ENCODE measurements at regions of chr6 and their contacts with region 1.

Region 1: GRCh38 chr6:139219271-139219729 is 72.5 kb downstream of the TXLNB start:
- DNase-seq: peak; percentile 54 to 70 (median 68)
- H3K4me3 ChIP-seq: no peak overlapping the region
- H3K4me3 Mint-ChIP-seq: peak overlapping the region in 6 of 8 donors; percentile 23 to 80 (median 74)
- H3K27ac ChIP-seq: no peak overlapping the region
- H3K27ac Mint-ChIP-seq: peak overlapping the region; percentile 33 to 94 (median 87)
- H3K4me1 ChIP-seq: peaks cover 14% of the 10 kb centered on the region
- H3K4me1 Mint-ChIP-seq: peaks cover 8 to 13% (median 11%) of the 10 kb centered on the region in 4 donors
- H3K27me3 ChIP-seq: no peaks in the 10 kb centered on the region
- H3K27me3 Mint-ChIP-seq: no peaks in the 10 kb centered on the region

Region 2: GRCh38 chr6:138931660-138932059 is 287.6 kb before region 1 on chr6:
- CTCF ChIA-PET with region 1: no interaction called
- POLR2A ChIA-PET with region 1: no interaction called
- intact Hi-C with region 1: no loop called
- DNase-seq: no peak
- H3K4me3 ChIP-seq: no peak overlapping the region
- H3K4me3 Mint-ChIP-seq: no peak overlapping the region
- H3K27ac ChIP-seq: no peak overlapping the region
- H3K27ac Mint-ChIP-seq: peak overlapping the region in 1 of 7 donors; percentile 23
- H3K4me1 ChIP-seq: peaks cover 7% of the 10 kb centered on the region
- H3K4me1 Mint-ChIP-seq: peaks cover 8 to 13% (median 9%) of the 10 kb centered on the region in 4 donors
- H3K27me3 ChIP-seq: no peaks in the 10 kb centered on the region
- H3K27me3 Mint-ChIP-seq: no peaks in the 10 kb centered on the region

Region 3: DNA sequence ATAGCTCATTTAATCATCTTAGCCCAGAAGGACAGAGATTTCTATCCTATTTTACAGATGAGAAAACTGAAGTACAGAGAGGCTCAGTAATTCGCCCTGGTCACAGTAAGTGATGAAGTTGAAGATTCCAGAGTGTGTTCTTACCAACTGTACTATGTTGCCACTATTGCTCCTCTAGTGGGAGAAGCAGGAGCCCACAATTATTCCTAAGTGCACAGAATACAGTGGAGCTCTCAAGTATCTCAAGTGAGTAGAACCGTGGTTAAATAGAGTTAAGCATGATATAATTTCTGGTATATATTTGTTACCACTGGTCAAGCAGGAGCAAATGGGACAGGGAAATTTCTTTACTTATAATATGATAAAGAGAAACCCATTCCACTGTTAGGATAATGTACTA is 253.3 kb before region 1 on chr6:
- CTCF ChIA-PET with region 1: no interaction called
- POLR2A ChIA-PET with region 1: no interaction called
- intact Hi-C with region 1: no loop called
- DNase-seq: no peak
- H3K4me3 ChIP-seq: no peak overlapping the region
- H3K4me3 Mint-ChIP-seq: no peak overlapping the region
- H3K27ac ChIP-seq: no peak overlapping the region
- H3K27ac Mint-ChIP-seq: no peak overlapping the region
- H3K4me1 ChIP-seq: peaks cover 29% of the 10 kb centered on the region
- H3K4me1 Mint-ChIP-seq: peaks cover 27 to 52% (median 39%) of the 10 kb centered on the region in 4 donors
- H3K27me3 ChIP-seq: no peaks in the 10 kb centered on the region
- H3K27me3 Mint-ChIP-seq: no peaks in the 10 kb centered on the region

Region 4: GRCh38 chr6:139109558-139109957 is 109.7 kb before region 1 on chr6:
- CTCF ChIA-PET with region 1: interaction called, 10 read pairs
- POLR2A ChIA-PET with region 1: no interaction called
- intact Hi-C with region 1: no loop called
- DNase-seq: peak in 4 of 5 donors; percentile 11 to 30 (median 21)
- H3K4me3 ChIP-seq: no peak overlapping the region
- H3K4me3 Mint-ChIP-seq: peak overlapping the region in 2 of 8 donors; percentile 13 to 39
- H3K27ac ChIP-seq: no peak overlapping the region
- H3K27ac Mint-ChIP-seq: peak overlapping the region; percentile 3 to 87 (median 44)
- H3K4me1 ChIP-seq: peaks cover 50% of the 10 kb centered on the region
- H3K4me1 Mint-ChIP-seq: peaks cover 38 to 59% (median 51%) of the 10 kb centered on the region in 4 donors
- H3K27me3 ChIP-seq: no peaks in the 10 kb centered on the region
- H3K27me3 Mint-ChIP-seq: no peaks in the 10 kb centered on the region

Region 5: DNA sequence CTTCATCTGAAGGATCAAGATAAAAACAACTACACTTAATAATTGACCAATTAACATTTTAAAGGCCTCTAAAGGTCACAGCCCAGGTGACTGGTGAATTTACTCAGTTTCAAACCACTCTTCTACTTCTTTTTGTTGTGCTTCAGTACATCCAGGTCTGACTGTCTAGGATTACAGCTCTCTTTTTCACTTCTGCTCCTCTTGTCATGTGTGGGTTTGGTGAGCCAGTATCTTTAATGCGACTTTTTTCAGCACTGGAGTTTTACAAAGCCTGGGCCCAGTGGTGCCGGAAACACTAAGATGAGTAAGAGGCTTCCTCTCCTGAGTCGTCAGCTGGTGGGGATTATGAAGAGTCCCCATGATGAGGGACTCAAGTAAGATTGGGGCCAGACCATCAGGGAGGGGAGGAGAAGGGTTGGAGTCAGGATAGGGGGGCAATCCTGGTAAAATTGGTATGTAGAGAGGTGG is 57.4 kb before region 1 on chr6:
- CTCF ChIA-PET with region 1: interaction called, 7 read pairs
- POLR2A ChIA-PET with region 1: interaction called, 10 read pairs
- intact Hi-C with region 1: no loop called
- DNase-seq: peak; percentile 62 to 87 (median 69)
- H3K4me3 ChIP-seq: peak overlapping the region in 1 of 2 donors; percentile 12
- H3K4me3 Mint-ChIP-seq: peak overlapping the region; percentile 76 to 91 (median 83)
- H3K27ac ChIP-seq: peak overlapping the region; percentile 56
- H3K27ac Mint-ChIP-seq: peak overlapping the region; percentile 86 to 98 (median 95)
- H3K4me1 ChIP-seq: peaks cover 100% of the 10 kb centered on the region
- H3K4me1 Mint-ChIP-seq: peaks cover 73 to 97% (median 85%) of the 10 kb centered on the region in 4 donors
- H3K27me3 ChIP-seq: no peaks in the 10 kb centered on the region
- H3K27me3 Mint-ChIP-seq: no peaks in the 10 kb centered on the region

Region 6: DNA sequence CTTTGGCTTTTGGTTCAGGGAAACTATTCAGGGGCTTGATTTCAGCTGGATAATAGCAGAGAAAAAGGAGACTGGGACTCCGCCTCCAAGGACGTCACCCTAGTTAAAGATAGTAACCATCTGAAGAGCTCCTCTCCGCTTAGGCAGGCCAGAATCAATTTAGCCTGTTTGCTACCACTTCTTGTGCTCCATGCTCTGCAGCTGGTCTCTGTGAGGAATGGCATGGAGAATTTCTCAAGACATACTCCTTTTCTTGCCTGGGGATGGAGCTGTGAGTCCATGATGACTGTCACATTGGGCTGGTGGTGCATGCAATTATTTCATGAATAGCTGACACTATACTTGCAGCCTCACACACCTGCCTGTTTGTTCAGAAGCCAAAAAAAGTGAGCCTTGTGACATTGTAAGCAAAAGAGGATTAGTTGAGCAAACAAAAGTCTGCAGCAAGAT is 11.1 kb after region 1 on chr6:
- CTCF ChIA-PET with region 1: interaction called, 31 read pairs
- POLR2A ChIA-PET with region 1: interaction called, 7 read pairs
- intact Hi-C with region 1: no loop called
- DNase-seq: peak in 4 of 5 donors; percentile 17 to 31 (median 22)
- H3K4me3 ChIP-seq: no peak overlapping the region
- H3K4me3 Mint-ChIP-seq: no peak overlapping the region
- H3K27ac ChIP-seq: no peak overlapping the region
- H3K27ac Mint-ChIP-seq: peak overlapping the region in 2 of 7 donors; percentile 19 to 65
- H3K4me1 ChIP-seq: no peaks in the 10 kb centered on the region
- H3K4me1 Mint-ChIP-seq: peaks cover 6 to 13% (median 9%) of the 10 kb centered on the region in 4 donors
- H3K27me3 ChIP-seq: no peaks in the 10 kb centered on the region
- H3K27me3 Mint-ChIP-seq: no peaks in the 10 kb centered on the region

Region 7: DNA sequence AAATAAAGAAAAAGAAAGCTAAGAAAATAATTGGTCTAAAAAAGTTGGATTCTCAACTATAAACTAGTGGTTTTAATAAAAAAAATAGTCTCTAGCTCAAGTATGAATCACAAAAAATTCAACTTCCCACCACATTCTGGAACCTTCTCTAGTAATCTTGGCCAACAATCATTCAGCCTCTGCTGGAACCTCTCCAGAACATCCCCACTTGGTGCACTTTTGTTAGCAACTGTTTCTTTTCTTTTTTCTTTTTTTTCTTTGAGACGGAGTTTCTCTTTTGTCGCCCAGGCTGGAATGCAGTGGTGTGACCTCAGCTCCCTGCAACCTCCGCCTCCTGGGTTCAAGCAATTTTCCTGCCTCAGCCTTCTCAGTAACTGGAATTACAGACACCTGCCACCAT is 36.8 kb after region 1 on chr6:
- CTCF ChIA-PET with region 1: interaction called, 41 read pairs
- POLR2A ChIA-PET with region 1: interaction called, 9 read pairs
- intact Hi-C with region 1: loop called (anchors 2 kb)
- DNase-seq: no peak
- H3K4me3 ChIP-seq: no peak overlapping the region
- H3K4me3 Mint-ChIP-seq: peak overlapping the region in 1 of 8 donors; percentile 17
- H3K27ac ChIP-seq: no peak overlapping the region
- H3K27ac Mint-ChIP-seq: peak overlapping the region in 6 of 7 donors; percentile 62 to 94 (median 82)
- H3K4me1 ChIP-seq: peaks cover 55% of the 10 kb centered on the region
- H3K4me1 Mint-ChIP-seq: peaks cover 46 to 61% (median 50%) of the 10 kb centered on the region in 4 donors
- H3K27me3 ChIP-seq: no peaks in the 10 kb centered on the region
- H3K27me3 Mint-ChIP-seq: no peaks in the 10 kb centered on the region

Region 8: GRCh38 chr6:139323511-139324300 is 104.4 kb after region 1 on chr6:
- CTCF ChIA-PET with region 1: interaction called, 9 read pairs
- POLR2A ChIA-PET with region 1: interaction called, 18 read pairs
- intact Hi-C with region 1: loop called (anchors 1 kb)
- DNase-seq: peak; percentile 86 to 91 (median 89)
- H3K4me3 ChIP-seq: peak overlapping the region; percentile 33 to 61
- H3K4me3 Mint-ChIP-seq: peak overlapping the region; percentile 78 to 92 (median 88)
- H3K27ac ChIP-seq: peak overlapping the region; percentile 87
- H3K27ac Mint-ChIP-seq: peak overlapping the region; percentile 98 to 100 (median 98)
- H3K4me1 ChIP-seq: peaks cover 35% of the 10 kb centered on the region
- H3K4me1 Mint-ChIP-seq: peaks cover 21 to 43% (median 34%) of the 10 kb centered on the region in 4 donors
- H3K27me3 ChIP-seq: no peaks in the 10 kb centered on the region
- H3K27me3 Mint-ChIP-seq: no peaks in the 10 kb centered on the region